OCI-LY7 (cell line): ENCODE measurements at regions of chr3 and their contacts with region 1.

Region 1: GRCh38 chr3:88180398-88180999 is 30.7 kb downstream of the C3orf38 start:
- DNase-seq: peak; percentile 68
- H3K4me3 ChIP-seq: no peak overlapping the region
- H3K27ac ChIP-seq: no peak overlapping the region
- H3K4me1 ChIP-seq: no peaks in the 10 kb centered on the region
- CTCF ChIP-seq: peak; percentile 83

Region 2: GRCh38 chr3:87350364-87351199 is 829.9 kb before region 1 on chr3:
- CTCF ChIA-PET with region 1: no interaction called
- POLR2A ChIA-PET with region 1: no interaction called
- intact Hi-C with region 1: loop called (anchors 2 kb)
- DNase-seq: peak; percentile 64
- H3K4me3 ChIP-seq: no peak overlapping the region
- H3K27ac ChIP-seq: no peak overlapping the region
- H3K4me1 ChIP-seq: no peaks in the 10 kb centered on the region
- CTCF ChIP-seq: peak; percentile 96

Region 3: DNA sequence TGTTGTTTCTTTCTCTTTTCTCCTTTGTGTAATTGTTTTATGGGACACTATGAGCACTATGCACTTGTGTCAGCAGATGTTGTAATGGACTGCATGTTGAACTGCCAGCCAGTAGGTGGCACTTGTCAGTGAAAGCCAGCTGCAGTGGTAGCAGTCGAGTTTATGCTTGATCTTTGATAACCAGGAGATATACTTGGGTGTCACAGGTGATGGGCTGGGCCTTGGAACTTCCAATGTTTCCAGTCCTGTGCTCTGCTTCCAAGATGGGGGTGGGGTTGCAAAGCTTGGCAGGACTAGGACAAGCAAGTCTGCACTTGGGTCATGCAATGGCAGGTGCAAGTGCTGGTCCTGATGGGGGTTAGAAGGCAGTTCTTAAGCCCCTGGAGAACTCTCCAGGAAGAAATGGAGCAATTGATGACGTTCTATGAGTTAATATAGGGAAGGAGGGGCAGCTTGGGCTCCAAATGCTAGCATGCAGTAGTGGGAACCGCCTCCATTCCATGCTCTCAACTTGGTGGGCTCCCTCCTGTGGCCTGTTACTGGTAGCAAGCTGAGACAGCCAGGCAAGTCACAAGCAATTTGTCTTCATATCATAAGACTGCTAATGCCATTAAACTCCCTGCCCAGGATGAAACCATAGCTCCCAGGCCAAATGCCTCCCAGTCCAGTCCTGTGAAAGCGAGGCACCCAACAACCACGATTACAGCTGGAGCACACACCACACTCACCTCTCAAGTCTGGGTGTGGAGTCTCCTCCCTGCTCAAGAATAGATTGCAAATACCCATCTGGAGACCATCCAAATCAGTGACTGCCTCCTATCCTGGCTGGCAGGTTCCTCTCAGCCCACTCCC is 408.9 kb before region 1 on chr3:
- CTCF ChIA-PET with region 1: no interaction called
- POLR2A ChIA-PET with region 1: no interaction called
- intact Hi-C with region 1: loop called (anchors 1 kb)
- DNase-seq: peak; percentile 51
- H3K4me3 ChIP-seq: no peak overlapping the region
- H3K27ac ChIP-seq: no peak overlapping the region
- H3K4me1 ChIP-seq: no peaks in the 10 kb centered on the region
- CTCF ChIP-seq: peak; percentile 88